Endothelial cell of umbilical vein (primary cell): ENCODE measurements at regions of chr10 and their contacts with region 1.

Region 1: DNA sequence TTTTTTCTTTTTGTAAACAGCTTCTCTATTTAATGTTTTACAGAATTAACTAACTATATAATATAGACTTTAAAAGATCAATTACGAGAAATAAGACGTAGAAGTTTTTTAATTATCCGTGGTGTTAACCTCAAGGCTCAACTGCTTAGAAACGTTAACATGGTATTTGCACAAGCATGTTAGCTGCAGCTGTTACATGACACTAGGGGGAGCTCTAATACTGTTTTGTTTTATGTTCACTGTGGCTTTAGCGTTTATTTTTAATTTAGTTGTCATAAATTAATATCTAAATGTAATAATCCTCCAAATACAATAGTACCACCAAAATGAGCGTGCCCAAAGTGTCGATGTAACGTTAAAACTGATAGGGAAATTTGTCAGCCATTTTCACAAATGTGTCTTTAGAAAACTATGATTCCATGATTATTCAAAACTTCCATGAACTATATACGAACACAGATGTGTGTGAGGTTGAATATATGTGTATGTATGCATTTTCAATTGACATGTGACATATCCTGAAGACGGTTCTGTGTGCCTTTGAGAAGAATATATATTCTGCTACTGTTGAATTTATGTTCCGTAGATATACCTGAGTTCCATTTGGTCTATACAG is 828.8 kb upstream of the MBL2 start:
- DNase-seq: peak; percentile 52
- H3K4me3 ChIP-seq: no peak overlapping the region
- H3K27ac ChIP-seq: no peak overlapping the region
- H3K4me1 ChIP-seq: no peaks in the 10 kb centered on the region
- H3K27me3 ChIP-seq: peaks cover 2 to 9% of the 10 kb centered on the region in 2 experiments
- CTCF ChIP-seq: peak; percentile 67 to 75
- POLR2A ChIP-seq: no peak

Region 2: DNA sequence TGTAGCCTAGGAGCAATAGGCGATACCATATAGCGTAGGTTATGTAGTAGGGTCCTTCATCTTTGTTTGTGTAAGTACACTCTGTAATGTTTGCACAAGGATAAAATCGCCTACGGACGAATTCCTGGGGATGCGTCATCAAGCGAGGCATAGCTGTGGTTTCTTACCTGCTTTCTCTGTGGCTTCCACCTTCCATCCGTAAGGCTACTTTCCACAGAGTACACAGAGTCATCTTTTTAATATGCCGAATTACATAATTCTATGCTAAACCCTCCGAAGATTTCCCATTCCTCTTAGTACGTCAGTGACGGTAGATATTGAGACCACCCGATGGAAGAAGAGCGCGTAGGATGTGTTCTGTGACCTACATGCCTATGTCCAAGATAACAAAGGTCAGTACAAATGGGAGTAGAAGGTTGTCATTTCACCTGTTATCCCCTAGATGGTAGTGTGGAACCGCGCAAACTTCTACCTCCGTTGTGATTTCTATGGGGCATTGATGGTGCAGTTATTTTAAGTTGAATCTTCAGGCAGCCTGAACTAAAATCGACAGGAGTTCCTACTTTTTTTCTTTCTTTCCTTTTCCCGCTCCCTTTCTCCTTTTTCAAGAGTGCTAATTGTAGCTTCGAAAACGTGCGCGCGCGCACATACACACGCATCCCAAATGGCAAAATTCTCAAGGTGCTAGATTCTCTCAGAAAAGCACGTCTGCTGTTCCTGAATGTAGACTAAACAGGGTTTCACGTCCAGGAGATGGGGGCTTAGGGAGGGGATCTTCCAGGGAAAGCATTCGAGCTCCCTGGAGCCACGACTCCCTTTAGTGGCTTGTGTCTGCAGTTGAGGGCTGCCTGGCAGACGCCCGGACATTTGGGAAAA is 717.1 kb before region 1 on chr10:
- CTCF ChIA-PET with region 1: no interaction called
- POLR2A ChIA-PET with region 1: no interaction called
- dilution Hi-C with region 1: no loop called
- intact Hi-C with region 1: loop called (anchors 5 kb)
- DNase-seq: peak; percentile 67
- H3K4me3 ChIP-seq: no peak overlapping the region
- H3K27ac ChIP-seq: no peak overlapping the region
- H3K4me1 ChIP-seq: peaks cover 17% of the 10 kb centered on the region
- H3K27me3 ChIP-seq: peaks cover 0 to 6% of the 10 kb centered on the region in 2 experiments
- CTCF ChIP-seq: peak; percentile 70 to 72
- POLR2A ChIP-seq: no peak

Region 3: GRCh38 chr10:53508197-53508596 is 93.2 kb before region 1 on chr10:
- CTCF ChIA-PET with region 1: no interaction called
- POLR2A ChIA-PET with region 1: no interaction called
- dilution Hi-C with region 1: no loop called
- intact Hi-C with region 1: no loop called
- DNase-seq: no peak
- H3K4me3 ChIP-seq: no peak overlapping the region
- H3K27ac ChIP-seq: no peak overlapping the region
- H3K4me1 ChIP-seq: no peaks in the 10 kb centered on the region
- H3K27me3 ChIP-seq: no peaks in the 10 kb centered on the region
- CTCF ChIP-seq: no peak
- POLR2A ChIP-seq: no peak

Region 4: DNA sequence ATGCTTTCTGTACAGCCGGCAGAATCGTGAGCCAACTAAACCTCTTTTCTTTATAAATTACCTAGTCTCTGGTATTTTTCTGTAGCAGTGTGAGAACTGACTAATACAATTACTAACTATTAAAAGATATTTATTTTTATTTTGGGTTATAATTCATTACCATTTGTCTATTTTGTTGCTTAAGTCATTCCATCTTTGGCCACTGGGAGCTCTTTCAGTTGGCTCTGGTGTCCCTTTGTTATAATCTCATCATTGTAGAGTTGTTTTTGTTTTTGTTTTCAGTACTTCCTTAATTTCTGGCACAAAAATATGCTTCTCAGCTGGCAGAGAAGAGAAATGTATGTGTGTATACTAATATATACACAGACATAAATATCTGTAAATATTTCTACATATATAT is 20.9 kb before region 1 on chr10:
- CTCF ChIA-PET with region 1: interaction called, 20 read pairs
- POLR2A ChIA-PET with region 1: no interaction called
- dilution Hi-C with region 1: no loop called
- intact Hi-C with region 1: no loop called
- DNase-seq: peak; percentile 7
- H3K4me3 ChIP-seq: no peak overlapping the region
- H3K27ac ChIP-seq: peak overlapping the region; percentile 77
- H3K4me1 ChIP-seq: peaks cover 25% of the 10 kb centered on the region
- H3K27me3 ChIP-seq: no peaks in the 10 kb centered on the region
- CTCF ChIP-seq: no peak
- POLR2A ChIP-seq: no peak

Region 5: DNA sequence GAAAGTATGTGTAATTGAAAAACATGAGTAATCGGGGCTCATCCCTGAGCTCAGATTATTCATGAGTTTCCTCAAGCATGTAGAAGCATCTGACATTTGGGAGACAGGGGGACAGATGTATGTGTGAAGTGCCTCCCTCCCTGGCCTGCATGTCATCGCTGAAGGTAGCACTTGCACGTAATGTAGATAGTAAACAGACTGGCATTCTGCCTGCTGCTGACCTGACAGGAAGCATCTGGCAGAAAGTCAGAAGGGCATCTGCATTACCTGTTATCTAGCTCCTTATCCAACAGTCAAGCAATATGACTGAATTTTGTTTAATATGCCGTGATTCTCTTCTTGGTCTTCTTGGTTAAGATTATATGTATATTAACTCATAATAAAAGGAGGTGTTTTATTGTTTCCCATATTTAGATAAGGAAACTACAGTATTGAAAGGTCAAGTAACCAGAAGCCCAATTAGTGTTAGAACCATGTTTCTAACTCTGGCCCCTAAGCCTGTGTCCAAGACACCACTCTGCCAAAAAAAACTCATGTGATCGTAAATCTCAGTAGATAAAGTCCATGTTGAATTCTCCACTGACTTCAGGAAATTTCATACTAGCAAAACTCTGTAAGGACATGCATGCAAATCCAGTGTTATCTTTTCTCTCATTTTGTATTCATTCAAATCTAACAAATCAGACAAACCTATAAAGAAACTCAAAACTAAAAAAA is 89.3 kb after region 1 on chr10:
- CTCF ChIA-PET with region 1: no interaction called
- POLR2A ChIA-PET with region 1: no interaction called
- dilution Hi-C with region 1: no loop called
- intact Hi-C with region 1: no loop called
- DNase-seq: peak; percentile 31
- H3K4me3 ChIP-seq: no peak overlapping the region
- H3K27ac ChIP-seq: no peak overlapping the region
- H3K4me1 ChIP-seq: no peaks in the 10 kb centered on the region
- H3K27me3 ChIP-seq: no peaks in the 10 kb centered on the region
- CTCF ChIP-seq: no peak
- POLR2A ChIP-seq: no peak

Region 6: DNA sequence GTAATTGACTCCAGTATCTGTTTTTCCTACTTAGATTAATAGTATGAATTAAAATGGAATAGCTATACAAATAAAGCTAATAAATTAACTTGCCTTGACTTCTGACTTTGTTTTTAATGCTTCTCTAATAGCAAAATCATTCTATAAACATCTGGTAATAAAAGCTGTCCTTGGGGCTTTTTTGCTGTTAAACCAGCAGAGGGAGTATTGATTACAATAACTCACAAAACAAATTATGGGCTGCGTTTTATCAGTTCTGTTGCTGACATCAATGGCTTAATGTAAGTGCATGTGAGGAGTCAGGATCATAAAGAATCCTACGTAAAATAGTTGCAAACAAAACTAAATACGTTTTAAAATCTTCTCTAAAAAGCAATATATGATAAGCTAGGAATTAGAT is 531.8 kb after region 1 on chr10:
- CTCF ChIA-PET with region 1: interaction called, 3 read pairs
- POLR2A ChIA-PET with region 1: no interaction called
- dilution Hi-C with region 1: no loop called
- intact Hi-C with region 1: loop called (anchors 5 kb)
- DNase-seq: peak; percentile 22
- H3K4me3 ChIP-seq: no peak overlapping the region
- H3K27ac ChIP-seq: no peak overlapping the region
- H3K4me1 ChIP-seq: no peaks in the 10 kb centered on the region
- H3K27me3 ChIP-seq: no peaks in the 10 kb centered on the region
- CTCF ChIP-seq: peak; percentile 22 to 35
- POLR2A ChIP-seq: no peak

Region 7: GRCh38 chr10:55091691-55092328 is 1490.4 kb after region 1 on chr10:
- CTCF ChIA-PET with region 1: no interaction called
- POLR2A ChIA-PET with region 1: no interaction called
- dilution Hi-C with region 1: no loop called
- intact Hi-C with region 1: loop called (anchors 2 kb)
- DNase-seq: peak; percentile 21
- H3K4me3 ChIP-seq: no peak overlapping the region
- H3K27ac ChIP-seq: no peak overlapping the region
- H3K4me1 ChIP-seq: no peaks in the 10 kb centered on the region
- H3K27me3 ChIP-seq: no peaks in the 10 kb centered on the region
- CTCF ChIP-seq: peak; percentile 44 to 53
- POLR2A ChIP-seq: no peak